ENCODE measurements at regions of chr12 and their contacts with region 1.

Region 1: DNA sequence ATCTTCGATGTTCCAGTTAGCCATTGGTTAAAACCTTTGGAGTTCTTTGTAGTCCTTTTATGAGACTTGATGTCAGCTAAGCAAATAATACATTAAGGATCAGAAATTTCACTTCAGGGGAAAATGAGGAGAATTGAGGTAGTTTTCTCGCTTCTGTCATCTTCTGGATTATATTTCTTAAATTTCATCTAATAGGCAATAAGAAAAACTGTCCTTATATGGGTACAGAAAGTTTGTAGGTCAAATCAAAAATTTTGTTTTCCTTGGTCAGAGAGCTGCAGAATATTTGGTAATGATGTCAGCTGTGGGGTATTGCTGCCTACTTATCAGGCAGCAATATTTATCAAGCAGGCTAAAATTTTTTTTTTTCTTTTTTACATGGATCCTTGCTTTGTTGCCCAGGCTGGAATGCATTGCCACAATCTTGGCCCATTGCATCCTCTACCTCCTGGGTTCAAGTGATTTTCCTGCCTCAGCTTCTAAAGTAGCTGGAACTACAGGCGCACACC is 37.1 kb downstream of the RIMKLB start:
- DNase-seq: no peak
- H3K4me3 ChIP-seq: peak overlapping the region in 1 of 2 donors; percentile 30
- H3K27ac ChIP-seq: peak overlapping the region; percentile 88 to 89
- H3K4me1 ChIP-seq: peaks cover 2 to 41% of the 10 kb centered on the region in 2 donors
- H3K27me3 ChIP-seq: no peaks in the 10 kb centered on the region
- CTCF ChIP-seq: no peak

Region 2: GRCh38 chr12:8033153-8034044 is 701.5 kb before region 1 on chr12:
- intact Hi-C with region 1: no loop called
- DNase-seq: peak in 1 of 2 donors; percentile 85
- H3K4me3 ChIP-seq: peak overlapping the region; percentile 81 to 83
- H3K27ac ChIP-seq: peak overlapping the region; percentile 97 to 99
- H3K4me1 ChIP-seq: peaks cover 14 to 29% of the 10 kb centered on the region in 2 donors
- H3K27me3 ChIP-seq: no peaks in the 10 kb centered on the region
- CTCF ChIP-seq: no peak

Region 3: DNA sequence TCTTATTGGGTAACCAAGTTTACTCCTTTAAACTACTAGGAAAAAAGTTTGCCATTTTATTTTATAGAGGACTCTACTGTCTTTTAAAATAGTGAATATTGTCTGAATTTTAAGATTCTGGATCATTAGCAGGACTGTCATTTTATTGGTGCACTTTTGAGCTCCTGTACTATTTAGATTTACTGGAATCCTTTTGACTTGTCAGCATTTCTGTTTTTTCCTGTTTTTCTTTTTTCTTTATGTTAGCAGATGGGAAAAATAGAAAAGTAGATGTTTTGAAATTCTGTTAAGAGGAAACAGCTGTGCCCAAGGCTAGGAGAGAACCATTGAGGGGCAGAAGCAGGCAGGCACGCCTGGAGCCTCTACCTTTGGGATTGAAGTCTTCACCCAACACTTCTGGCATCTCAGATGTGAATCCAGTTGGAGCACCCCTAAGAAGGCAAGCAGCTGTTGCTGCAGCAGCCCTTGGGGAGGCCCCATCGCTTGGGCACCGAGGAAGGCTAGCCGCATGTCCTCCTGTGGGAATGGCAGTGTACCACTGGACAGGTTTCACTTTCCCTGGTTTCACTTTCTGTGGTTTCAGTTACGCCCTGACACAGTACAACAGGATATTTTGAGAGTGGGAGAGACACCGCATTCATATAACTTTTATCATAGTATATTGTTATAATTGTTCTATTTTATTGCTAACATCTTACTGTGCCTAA is 25.6 kb before region 1 on chr12:
- intact Hi-C with region 1: loop called (anchors 2 kb)
- DNase-seq: no peak
- H3K4me3 ChIP-seq: peak overlapping the region; percentile 48 to 60
- H3K27ac ChIP-seq: peak overlapping the region; percentile 48 to 59
- H3K4me1 ChIP-seq: peaks cover 0 to 22% of the 10 kb centered on the region in 2 donors
- H3K27me3 ChIP-seq: no peaks in the 10 kb centered on the region
- CTCF ChIP-seq: no peak

Measured in ascending aorta (tissue), 2 donors.